Naive thymus-derived CD8-positive, alpha-beta T cell (primary cell): ENCODE measurements at regions of chr17 and their contacts with region 1.

Region 1: DNA sequence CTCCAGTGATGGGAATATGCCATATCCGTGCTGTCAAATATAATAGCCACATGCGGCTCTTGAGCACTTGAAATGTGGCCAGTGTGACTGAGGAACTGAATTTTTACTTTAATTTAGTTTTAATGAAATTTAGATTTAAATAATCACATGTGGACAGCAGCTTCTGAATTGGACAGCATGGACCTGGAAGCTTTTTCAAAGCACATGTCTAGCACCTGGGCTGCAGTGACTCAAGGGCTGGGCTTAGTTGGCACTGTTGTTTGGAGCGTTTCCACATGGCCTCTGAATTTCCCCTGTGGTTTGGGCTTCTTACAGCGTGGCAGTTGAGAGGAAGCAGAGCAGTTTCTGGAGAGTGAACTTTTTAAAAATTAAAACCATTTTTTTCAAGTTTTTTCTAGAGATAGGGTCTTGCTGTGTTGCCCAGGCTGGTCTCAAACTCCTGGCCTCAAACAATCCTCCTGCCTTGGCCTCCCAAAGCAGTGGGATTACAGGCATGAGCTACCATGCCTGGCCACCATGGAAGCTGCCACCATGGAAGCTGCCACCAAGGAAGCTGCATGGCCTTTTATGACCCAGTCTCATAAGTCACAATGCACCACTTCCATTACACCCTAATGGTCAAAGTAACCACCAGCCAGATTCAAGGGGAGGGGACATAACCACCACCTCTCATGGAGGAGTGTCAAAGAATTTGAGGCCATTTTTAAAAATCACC is 6.7 kb upstream of the TOB1 start:
- DNase-seq: peak in 9 of 10 donors; percentile 30 to 75 (median 41)
- ATAC-seq: peak; percentile 64 to 78
- H3K4me3 Mint-ChIP-seq: peak overlapping the region in 7 of 10 donors; percentile 11 to 87 (median 48)
- H3K27ac Mint-ChIP-seq: peak overlapping the region; percentile 16 to 95 (median 70)
- H3K4me1 Mint-ChIP-seq: peaks cover 22 to 53% (median 51%) of the 10 kb centered on the region in 4 donors
- H3K27me3 Mint-ChIP-seq: no peaks in the 10 kb centered on the region

Region 2: DNA sequence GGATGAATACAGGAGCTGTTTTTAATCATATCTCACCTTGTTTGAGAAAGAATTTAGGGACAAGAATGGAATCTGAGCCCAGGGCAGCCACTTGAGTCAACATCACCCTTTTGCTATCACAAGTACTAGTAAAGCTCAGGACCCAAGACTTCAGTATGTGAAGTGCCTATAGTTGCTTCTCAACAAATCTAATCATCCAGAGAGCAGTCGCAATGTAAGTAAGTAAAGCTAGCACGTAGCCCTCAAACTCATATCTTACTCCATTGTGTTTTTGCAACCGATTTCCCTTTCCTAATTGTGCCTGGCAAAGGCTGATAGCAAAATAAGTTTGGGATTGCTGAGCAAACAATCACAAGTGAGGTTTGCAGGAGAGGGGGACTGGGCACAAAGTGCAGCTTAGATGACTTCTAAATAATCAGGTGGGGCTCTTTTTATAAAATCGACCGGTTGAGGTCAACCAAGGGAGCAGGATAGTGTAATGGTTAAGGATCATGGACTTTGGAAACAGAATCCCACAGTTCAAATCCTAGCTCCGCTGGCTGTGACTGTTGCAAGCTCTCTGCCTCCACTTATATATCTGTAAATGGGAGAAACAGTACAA is 19.8 kb before region 1 on chr17:
- POLR2A ChIA-PET with region 1: interaction called, 171 read pairs
- DNase-seq: no peak
- ATAC-seq: no peak
- H3K4me3 Mint-ChIP-seq: peak overlapping the region in 8 of 10 donors; percentile 70 to 88 (median 84)
- H3K27ac Mint-ChIP-seq: peak overlapping the region in 9 of 10 donors; percentile 87 to 96 (median 93)
- H3K4me1 Mint-ChIP-seq: peaks cover 11 to 28% (median 23%) of the 10 kb centered on the region in 4 donors
- H3K27me3 Mint-ChIP-seq: no peaks in the 10 kb centered on the region

Region 3: DNA sequence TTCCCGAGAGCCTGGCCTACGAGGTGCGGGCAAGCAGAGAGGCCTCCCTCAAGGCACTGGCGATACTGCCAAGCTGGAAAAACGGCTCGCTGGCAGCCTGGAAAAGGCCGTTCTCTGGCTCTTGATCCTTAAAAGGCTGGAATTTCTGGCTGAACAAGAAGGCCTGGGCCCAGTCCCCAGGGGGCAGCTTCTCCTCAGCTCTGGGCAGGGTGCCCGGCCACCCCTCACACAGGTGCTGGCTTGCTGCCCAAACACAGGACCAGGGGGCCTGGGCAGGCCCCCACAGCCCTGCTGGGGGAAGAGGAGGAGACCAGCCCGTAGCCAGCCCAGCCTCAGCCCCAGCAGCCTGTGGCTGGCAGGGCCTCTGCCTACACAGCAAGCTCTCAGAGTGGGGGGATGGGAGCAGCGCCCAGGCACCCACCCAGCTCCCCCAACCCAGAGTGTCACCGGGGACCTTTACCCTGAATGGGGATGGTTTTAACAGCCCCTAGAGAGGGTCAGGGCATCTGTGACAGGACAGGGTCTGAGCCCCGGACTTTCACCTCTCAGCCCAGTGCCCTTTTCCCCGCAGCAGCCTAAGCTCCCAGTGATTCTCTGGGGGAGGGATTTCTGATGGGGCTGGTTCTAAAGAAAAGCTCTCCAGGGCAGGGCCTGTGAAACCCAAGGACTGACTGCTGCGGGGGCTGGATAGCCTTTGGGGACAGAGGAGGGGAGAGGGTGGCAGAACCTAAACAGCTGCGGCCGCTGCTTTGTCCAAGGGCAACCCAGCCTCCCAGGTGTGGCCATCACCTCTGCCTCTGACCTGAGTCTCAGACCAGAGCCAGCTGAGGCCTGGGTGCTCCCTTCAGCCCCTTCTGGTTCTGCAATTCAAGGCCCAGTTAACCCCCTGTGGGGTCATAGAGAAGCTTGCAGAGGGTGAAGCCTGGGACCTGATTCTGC is 31.9 kb after region 1 on chr17:
- POLR2A ChIA-PET with region 1: interaction called, 544 read pairs
- DNase-seq: no peak
- ATAC-seq: no peak
- H3K4me3 Mint-ChIP-seq: peak overlapping the region in 5 of 10 donors; percentile 3 to 66 (median 49)
- H3K27ac Mint-ChIP-seq: peak overlapping the region; percentile 67 to 92 (median 86)
- H3K4me1 Mint-ChIP-seq: peaks cover 50 to 72% (median 70%) of the 10 kb centered on the region in 4 donors
- H3K27me3 Mint-ChIP-seq: no peaks in the 10 kb centered on the region

Region 4: GRCh38 chr17:50931144-50931908 is 58.5 kb after region 1 on chr17:
- POLR2A ChIA-PET with region 1: interaction called, 544 read pairs
- DNase-seq: peak; percentile 25 to 77 (median 56)
- ATAC-seq: peak; percentile 82 to 86
- H3K4me3 Mint-ChIP-seq: peak overlapping the region; percentile 80 to 98 (median 88)
- H3K27ac Mint-ChIP-seq: peak overlapping the region; percentile 94 to 99 (median 98)
- H3K4me1 Mint-ChIP-seq: peaks cover 27 to 56% (median 50%) of the 10 kb centered on the region in 4 donors
- H3K27me3 Mint-ChIP-seq: peaks cover 0 to 5% (median 0%) of the 10 kb centered on the region in 5 donors

Region 5: GRCh38 chr17:50949989-50950881 is 77.4 kb after region 1 on chr17:
- POLR2A ChIA-PET with region 1: interaction called, 535 read pairs
- DNase-seq: peak; percentile 34 to 84 (median 50)
- ATAC-seq: peak; percentile 92 to 95
- H3K4me3 Mint-ChIP-seq: peak overlapping the region in 3 of 10 donors; percentile 33 to 54 (median 45)
- H3K27ac Mint-ChIP-seq: peak overlapping the region in 9 of 10 donors; percentile 49 to 90 (median 70)
- H3K4me1 Mint-ChIP-seq: peaks cover 15 to 41% (median 36%) of the 10 kb centered on the region in 4 donors
- H3K27me3 Mint-ChIP-seq: no peaks in the 10 kb centered on the region